ENCODE measurements at regions of chr14 and their contacts with region 1.

Region 1: DNA sequence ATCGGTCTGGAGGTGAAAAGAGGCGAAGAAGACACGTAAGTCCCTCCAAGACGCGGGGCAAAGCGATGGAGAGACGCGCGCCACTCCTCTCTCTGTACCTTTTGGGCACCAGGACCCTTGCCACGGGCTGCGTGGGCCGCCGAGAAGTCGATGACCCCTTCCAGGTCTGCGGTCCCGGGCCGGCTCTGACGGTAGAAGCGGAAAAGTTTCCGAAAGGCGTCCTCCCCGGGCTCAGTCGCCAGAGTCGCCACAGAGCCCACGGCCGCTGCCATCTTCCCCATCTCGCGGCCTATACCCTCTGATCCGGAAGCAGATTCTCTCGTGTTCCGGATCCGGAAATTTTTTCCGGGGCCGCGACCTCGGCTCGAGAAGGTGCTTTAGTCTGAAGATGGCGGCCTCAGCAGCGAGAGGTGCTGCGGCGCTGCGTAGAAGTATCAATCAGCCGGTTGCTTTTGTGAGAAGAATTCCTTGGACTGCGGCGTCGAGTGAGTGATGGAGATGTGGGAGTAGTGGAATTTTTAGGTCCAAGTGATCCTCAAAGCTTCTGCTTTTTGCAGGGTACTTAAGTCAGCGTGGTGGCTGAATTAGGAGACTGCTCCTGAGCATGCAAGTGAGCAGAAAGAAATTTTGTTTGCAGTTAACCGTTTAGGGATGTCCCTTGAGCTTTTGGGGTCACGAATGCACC is at the starts of genes ALKBH1 and SLIRP:
- DNase-seq: peak; percentile 73 to 93 (median 88)
- ATAC-seq: peak; percentile 97
- H3K4me3 ChIP-seq: peak within 1 kb of the TSS; percentile 91 to 92
- H3K4me3 Mint-ChIP-seq: peak within 1 kb of the TSS; percentile 96
- H3K27ac ChIP-seq: peak within 1 kb of the TSS; percentile 72 to 75
- H3K27ac Mint-ChIP-seq: peak within 1 kb of the TSS; percentile 91
- H3K4me1 ChIP-seq: peaks cover 29% of the 10 kb centered on the region
- H3K4me1 Mint-ChIP-seq: peaks cover 46% of the 10 kb centered on the region
- H3K27me3 ChIP-seq: no peaks in the 10 kb centered on the region
- H3K27me3 Mint-ChIP-seq: no peaks in the 10 kb centered on the region
- CTCF ChIP-seq: no peak
- total RNA-seq, gene ALKBH1: 10.7 to 11.9 TPM
- total RNA-seq, gene SLIRP: 58.2 TPM

Region 2: DNA sequence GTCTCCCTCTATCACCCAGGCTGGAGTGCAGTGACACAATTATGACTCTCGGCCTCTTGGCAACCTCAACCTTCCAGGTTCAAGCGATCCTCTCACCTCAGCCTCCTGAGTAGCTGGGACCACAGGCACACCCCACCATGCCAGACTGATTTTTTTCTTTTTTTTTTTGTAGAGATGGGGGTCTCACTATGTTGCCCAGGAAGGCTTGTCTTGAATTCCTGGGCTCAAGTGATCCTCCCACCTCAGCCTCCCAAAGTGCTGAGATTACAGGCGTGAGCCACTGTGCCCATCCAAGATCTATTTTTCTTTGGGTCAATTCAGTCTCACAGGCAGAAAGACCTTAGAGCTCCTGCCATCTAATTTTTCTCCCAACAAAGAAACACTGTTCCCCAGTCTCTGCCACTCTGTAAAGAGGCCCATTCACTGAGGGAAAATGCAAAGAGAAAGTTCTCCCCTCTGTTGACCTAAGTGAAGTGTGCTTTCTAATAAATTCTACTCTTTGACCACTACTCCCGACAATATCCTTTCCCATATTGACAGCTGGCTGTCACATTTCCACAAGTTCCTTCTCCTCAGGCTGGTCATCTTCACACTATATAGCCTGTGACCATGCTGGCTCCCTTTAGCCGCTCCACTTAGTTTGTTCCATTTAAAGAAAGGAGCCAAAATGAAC is 354.3 kb before region 1 on chr14:
- CTCF ChIA-PET with region 1: no interaction called
- POLR2A ChIA-PET with region 1: no interaction called
- intact Hi-C with region 1: no loop called
- DNase-seq: no peak
- ATAC-seq: no peak
- H3K4me3 ChIP-seq: no peak overlapping the region
- H3K4me3 Mint-ChIP-seq: no peak overlapping the region
- H3K27ac ChIP-seq: no peak overlapping the region
- H3K27ac Mint-ChIP-seq: no peak overlapping the region
- H3K4me1 ChIP-seq: no peaks in the 10 kb centered on the region
- H3K4me1 Mint-ChIP-seq: no peaks in the 10 kb centered on the region
- H3K27me3 ChIP-seq: no peaks in the 10 kb centered on the region
- H3K27me3 Mint-ChIP-seq: no peaks in the 10 kb centered on the region
- CTCF ChIP-seq: no peak

Region 3: GRCh38 chr14:77376771-77377501 is 330.9 kb before region 1 on chr14 and contains the starts of genes SAMD15 and TMED8:
- CTCF ChIA-PET with region 1: no interaction called
- POLR2A ChIA-PET with region 1: no interaction called
- intact Hi-C with region 1: loop called (anchors 1 to 2 kb)
- DNase-seq: peak; percentile 69 to 92 (median 82)
- ATAC-seq: peak; percentile 95
- H3K4me3 ChIP-seq: peak within 1 kb of the TSS; percentile 74 to 96
- H3K4me3 Mint-ChIP-seq: peak within 1 kb of the TSS; percentile 89
- H3K27ac ChIP-seq: peak within 1 kb of the TSS; percentile 62 to 91
- H3K27ac Mint-ChIP-seq: peak within 1 kb of the TSS; percentile 87
- H3K4me1 ChIP-seq: peaks cover 17% of the 10 kb centered on the region
- H3K4me1 Mint-ChIP-seq: peaks cover 38% of the 10 kb centered on the region
- H3K27me3 ChIP-seq: no peaks in the 10 kb centered on the region
- H3K27me3 Mint-ChIP-seq: no peaks in the 10 kb centered on the region
- CTCF ChIP-seq: no peak
- total RNA-seq, gene SAMD15: 0.50 to 0.52 TPM
- total RNA-seq, gene TMED8: 4.3 to 4.6 TPM

Region 4: DNA sequence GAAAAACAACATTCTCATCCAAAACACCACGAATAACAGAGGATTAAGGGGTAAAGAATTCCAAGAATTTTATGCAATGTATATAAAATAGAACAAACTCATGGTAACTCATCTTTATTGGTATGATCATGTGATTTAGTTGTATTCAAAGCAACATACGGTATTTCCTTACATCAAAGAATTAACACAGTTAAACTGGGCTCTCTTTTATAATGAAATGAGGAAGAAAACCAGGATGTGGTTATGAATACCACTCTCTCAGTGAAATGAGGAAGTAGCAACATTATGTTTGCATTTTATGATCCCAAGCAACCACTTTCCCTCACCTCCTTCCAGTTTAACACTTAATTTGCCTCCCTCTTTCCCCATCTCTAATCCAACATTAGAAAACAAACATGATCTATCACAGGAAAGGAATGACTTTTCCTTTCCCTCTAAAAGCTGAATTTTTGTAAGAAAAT is 114.3 kb before region 1 on chr14:
- CTCF ChIA-PET with region 1: no interaction called
- POLR2A ChIA-PET with region 1: interaction called, 6 read pairs
- intact Hi-C with region 1: loop called in 1 of 2 experiments (anchors 5 kb)
- DNase-seq: peak in 2 of 9 experiments; percentile 28 to 69
- ATAC-seq: peak; percentile 81
- H3K4me3 ChIP-seq: peak overlapping the region; percentile 1 to 16
- H3K4me3 Mint-ChIP-seq: peak overlapping the region; percentile 75
- H3K27ac ChIP-seq: peak overlapping the region; percentile 38 to 75
- H3K27ac Mint-ChIP-seq: peak overlapping the region; percentile 92
- H3K4me1 ChIP-seq: peaks cover 25% of the 10 kb centered on the region
- H3K4me1 Mint-ChIP-seq: peaks cover 54% of the 10 kb centered on the region
- H3K27me3 ChIP-seq: no peaks in the 10 kb centered on the region
- H3K27me3 Mint-ChIP-seq: no peaks in the 10 kb centered on the region
- CTCF ChIP-seq: no peak

Region 5: DNA sequence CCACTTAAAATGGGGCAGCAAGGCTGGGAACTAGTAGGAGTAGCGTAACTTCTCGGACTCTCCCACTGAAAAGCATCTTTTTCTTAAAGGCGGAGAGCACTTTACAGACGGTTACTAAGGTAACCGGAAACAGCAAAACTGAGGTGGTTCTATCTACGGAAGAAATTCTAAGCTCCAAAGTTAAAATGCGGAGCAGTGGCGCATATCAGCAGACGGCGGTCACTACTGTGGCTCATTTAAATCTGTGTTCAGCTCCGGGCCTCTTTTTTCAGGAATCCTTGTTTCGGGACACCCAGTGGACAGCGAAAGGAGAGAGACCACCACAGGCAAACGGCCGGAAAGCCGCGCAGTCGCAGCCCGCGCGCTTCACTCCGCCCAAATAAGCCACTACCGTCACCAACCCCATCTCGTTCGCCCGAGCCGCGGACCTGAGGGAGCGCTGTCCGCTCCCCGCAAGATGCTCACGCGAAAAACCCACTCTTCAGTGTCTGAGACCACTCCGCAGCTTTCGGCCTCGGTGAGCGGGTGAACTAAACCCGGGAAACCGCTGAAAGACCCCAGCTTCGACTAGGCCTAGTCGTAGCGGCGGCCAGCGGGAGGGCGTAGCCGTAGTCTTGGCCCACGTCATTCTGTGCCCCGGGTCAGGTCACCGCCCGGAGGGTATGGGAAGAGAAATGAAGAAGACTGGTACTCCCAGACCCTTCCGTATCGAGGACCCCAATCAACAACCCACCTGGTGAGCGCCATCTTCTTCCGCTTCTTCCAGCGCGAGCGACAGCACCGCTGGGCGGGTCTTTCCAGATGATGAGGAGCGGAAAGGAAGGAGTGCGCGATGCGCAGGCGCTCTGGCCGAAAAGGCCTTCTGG is 52.7 kb after region 1 on chr14 and contains the start of gene SNW1:
- CTCF ChIA-PET with region 1: no interaction called
- POLR2A ChIA-PET with region 1: interaction called, 8 read pairs
- intact Hi-C with region 1: loop called (anchors 1 kb)
- DNase-seq: peak; percentile 78 to 97 (median 89)
- ATAC-seq: peak; percentile 91
- H3K4me3 ChIP-seq: peak within 1 kb of the TSS; percentile 78 to 90
- H3K4me3 Mint-ChIP-seq: peak within 1 kb of the TSS; percentile 96
- H3K27ac ChIP-seq: peak within 1 kb of the TSS; percentile 97 to 99
- H3K27ac Mint-ChIP-seq: peak within 1 kb of the TSS; percentile 98
- H3K4me1 ChIP-seq: peaks cover 34% of the 10 kb centered on the region
- H3K4me1 Mint-ChIP-seq: peaks cover 50% of the 10 kb centered on the region
- H3K27me3 ChIP-seq: no peaks in the 10 kb centered on the region
- H3K27me3 Mint-ChIP-seq: no peaks in the 10 kb centered on the region
- CTCF ChIP-seq: no peak
- total RNA-seq, gene SNW1: 115 to 124 TPM

Region 6: DNA sequence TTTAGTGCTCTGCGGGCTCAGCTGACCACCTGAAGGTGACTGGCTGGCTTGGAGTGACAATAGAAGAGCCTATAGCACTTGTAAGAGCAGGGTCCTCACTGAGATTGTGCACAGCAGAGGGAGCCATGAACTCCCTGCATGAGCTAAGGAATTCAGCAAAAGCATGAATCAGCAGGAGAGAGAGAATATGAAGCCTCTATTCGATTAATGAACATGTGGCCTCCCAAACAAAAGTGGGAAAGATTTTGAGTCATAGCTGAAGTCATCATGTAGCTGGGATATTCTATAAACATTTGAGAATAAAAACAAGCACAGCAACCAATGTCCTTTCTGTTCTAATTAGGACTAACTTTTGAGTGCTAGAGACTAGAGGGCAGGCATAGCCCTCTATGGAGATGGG is 1876.8 kb after region 1 on chr14:
- CTCF ChIA-PET with region 1: no interaction called
- POLR2A ChIA-PET with region 1: no interaction called
- intact Hi-C with region 1: no loop called
- DNase-seq: no peak
- ATAC-seq: no peak
- H3K4me3 ChIP-seq: no peak overlapping the region
- H3K4me3 Mint-ChIP-seq: no peak overlapping the region
- H3K27ac ChIP-seq: no peak overlapping the region
- H3K27ac Mint-ChIP-seq: no peak overlapping the region
- H3K4me1 ChIP-seq: no peaks in the 10 kb centered on the region
- H3K4me1 Mint-ChIP-seq: no peaks in the 10 kb centered on the region
- H3K27me3 ChIP-seq: no peaks in the 10 kb centered on the region
- H3K27me3 Mint-ChIP-seq: no peaks in the 10 kb centered on the region
- CTCF ChIP-seq: no peak

Measured in CD8-positive, alpha-beta T cell (primary cell).